Activated CD4-positive, alpha-beta T cell treated with anti-CD3 and anti-CD28 coated beads, Interleukin-2, amount 10 ng/mL, durations not matched to agents 24 days and 14 days (primary cell): ENCODE measurements at regions of chr10 and their contacts with region 1.

Region 1: DNA sequence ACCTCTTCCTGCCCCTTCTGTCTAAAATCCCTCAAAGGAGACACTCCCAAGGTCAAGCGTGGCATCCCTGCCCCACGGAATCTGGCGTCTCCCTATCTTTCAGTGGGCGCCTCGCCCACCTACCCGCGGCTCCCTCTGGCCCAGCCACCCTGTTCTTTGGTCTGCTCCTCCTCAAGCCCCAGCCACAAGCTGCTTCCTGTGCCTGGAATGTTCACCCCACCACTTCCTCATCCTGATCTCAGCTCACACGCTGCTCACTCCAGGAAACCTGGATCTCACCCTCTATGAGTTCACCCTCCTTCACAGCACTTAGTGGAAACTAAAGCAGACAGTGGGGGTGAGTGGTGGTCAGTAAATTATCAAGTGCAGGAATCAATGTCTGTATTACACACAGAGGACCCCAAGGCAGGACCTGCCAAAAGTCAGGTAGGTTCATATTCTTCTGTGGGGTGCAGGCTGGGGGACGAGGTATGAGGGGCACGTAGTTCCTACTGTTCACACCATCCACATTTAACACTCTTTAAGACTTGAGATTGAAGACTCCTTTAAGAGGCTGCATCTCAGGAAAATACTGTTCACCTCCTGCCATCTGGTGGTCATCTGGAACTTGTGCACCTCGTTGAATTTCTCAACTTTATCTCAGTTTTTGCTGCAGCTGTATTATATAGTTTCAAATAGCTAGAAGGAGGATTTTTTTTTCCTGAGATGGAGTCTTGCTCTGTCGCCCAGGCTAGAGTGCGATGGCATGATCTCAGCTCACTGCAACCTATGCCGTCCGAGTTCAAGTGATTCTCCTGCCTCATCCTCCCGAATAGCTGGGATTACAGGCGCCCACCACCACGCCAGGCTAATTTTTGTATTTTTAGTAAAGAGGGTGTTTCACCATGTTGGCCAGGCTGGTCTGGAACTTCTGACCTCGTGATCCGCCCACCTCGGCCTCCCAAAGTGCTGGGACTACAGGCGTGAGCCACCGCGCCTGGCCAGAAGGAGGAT is 166.6 kb downstream of the ARHGAP21 start:
- DNase-seq: peak; percentile 71
- H3K4me3 Mint-ChIP-seq: no peak overlapping the region
- H3K27ac Mint-ChIP-seq: no peak overlapping the region
- H3K4me1 Mint-ChIP-seq: peaks cover 4% of the 10 kb centered on the region
- H3K27me3 Mint-ChIP-seq: no peaks in the 10 kb centered on the region

Region 2: GRCh38 chr10:24518981-24519597 is 38.0 kb before region 1 on chr10:
- intact Hi-C with region 1: loop called (anchors 5 kb)
- DNase-seq: peak; percentile 81
- H3K4me3 Mint-ChIP-seq: peak overlapping the region; percentile 2
- H3K27ac Mint-ChIP-seq: no peak overlapping the region
- H3K4me1 Mint-ChIP-seq: peaks cover 11% of the 10 kb centered on the region
- H3K27me3 Mint-ChIP-seq: no peaks in the 10 kb centered on the region

Region 3: GRCh38 chr10:24811881-24812622 is 255.0 kb after region 1 on chr10:
- intact Hi-C with region 1: no loop called
- DNase-seq: no peak
- H3K4me3 Mint-ChIP-seq: no peak overlapping the region
- H3K27ac Mint-ChIP-seq: no peak overlapping the region
- H3K4me1 Mint-ChIP-seq: peaks cover 5% of the 10 kb centered on the region
- H3K27me3 Mint-ChIP-seq: no peaks in the 10 kb centered on the region